ENCODE measurements at regions of chr10 and their contacts with region 1.

Region 1: GRCh38 chr10:16777473-16778370 is 39.5 kb downstream of the RSU1 start:
- DNase-seq: no peak
- H3K4me3 Mint-ChIP-seq: no peak overlapping the region
- H3K27ac Mint-ChIP-seq: peak overlapping the region; percentile 72
- H3K4me1 Mint-ChIP-seq: peaks cover 36% of the 10 kb centered on the region
- H3K27me3 Mint-ChIP-seq: no peaks in the 10 kb centered on the region

Region 2: GRCh38 chr10:15879058-15879457 is 898.7 kb before region 1 on chr10:
- CTCF ChIA-PET with region 1: no interaction called
- intact Hi-C with region 1: loop called (anchors 1 kb)
- DNase-seq: no peak
- H3K4me3 Mint-ChIP-seq: no peak overlapping the region
- H3K27ac Mint-ChIP-seq: no peak overlapping the region
- H3K4me1 Mint-ChIP-seq: no peaks in the 10 kb centered on the region
- H3K27me3 Mint-ChIP-seq: peaks cover 42% of the 10 kb centered on the region

Region 3: DNA sequence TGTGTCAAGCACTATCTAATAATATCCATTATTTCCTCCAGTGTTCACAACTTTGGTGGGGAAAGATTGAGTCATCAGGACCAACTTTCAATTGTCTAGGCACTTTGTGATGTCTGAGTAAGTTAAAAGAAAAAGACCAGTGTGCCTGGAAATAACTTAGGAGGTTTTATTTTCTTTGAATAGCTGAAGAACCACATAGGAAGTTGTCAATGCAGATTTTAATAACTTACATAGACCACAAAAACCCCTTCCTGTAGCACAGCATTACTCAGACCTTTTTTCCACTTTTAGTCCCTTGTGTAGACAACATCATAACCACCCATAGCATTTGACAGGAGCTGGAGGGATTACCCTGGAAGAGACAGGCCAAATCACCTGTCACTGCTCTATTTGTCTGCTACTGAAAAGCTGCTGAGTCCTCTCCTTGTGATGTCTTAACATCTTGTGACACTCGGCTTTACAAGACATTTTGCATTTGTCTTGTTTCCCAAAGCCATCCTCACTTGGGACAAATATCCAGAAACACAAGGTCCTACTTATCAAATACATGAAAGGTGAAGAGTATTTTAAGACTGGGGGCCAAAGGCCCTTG is 582.4 kb before region 1 on chr10:
- CTCF ChIA-PET with region 1: no interaction called
- intact Hi-C with region 1: loop called (anchors 1 kb)
- DNase-seq: peak; percentile 9
- H3K4me3 Mint-ChIP-seq: no peak overlapping the region
- H3K27ac Mint-ChIP-seq: peak overlapping the region; percentile 13
- H3K4me1 Mint-ChIP-seq: peaks cover 11% of the 10 kb centered on the region
- H3K27me3 Mint-ChIP-seq: peaks cover 6% of the 10 kb centered on the region

Region 4: GRCh38 chr10:16520900-16521299 is 256.8 kb before region 1 on chr10:
- CTCF ChIA-PET with region 1: no interaction called
- intact Hi-C with region 1: loop called (anchors 2 kb)
- DNase-seq: peak; percentile 56
- H3K4me3 Mint-ChIP-seq: peak overlapping the region; percentile 62
- H3K27ac Mint-ChIP-seq: no peak overlapping the region
- H3K4me1 Mint-ChIP-seq: peaks cover 6% of the 10 kb centered on the region
- H3K27me3 Mint-ChIP-seq: peaks cover 41% of the 10 kb centered on the region

Region 5: GRCh38 chr10:16799621-16800020 is 21.9 kb after region 1 on chr10:
- CTCF ChIA-PET with region 1: interaction called, 7 read pairs
- intact Hi-C with region 1: loop called (anchors 2 kb)
- DNase-seq: peak; percentile 43
- H3K4me3 Mint-ChIP-seq: no peak overlapping the region
- H3K27ac Mint-ChIP-seq: no peak overlapping the region
- H3K4me1 Mint-ChIP-seq: peaks cover 34% of the 10 kb centered on the region
- H3K27me3 Mint-ChIP-seq: no peaks in the 10 kb centered on the region

Region 6: DNA sequence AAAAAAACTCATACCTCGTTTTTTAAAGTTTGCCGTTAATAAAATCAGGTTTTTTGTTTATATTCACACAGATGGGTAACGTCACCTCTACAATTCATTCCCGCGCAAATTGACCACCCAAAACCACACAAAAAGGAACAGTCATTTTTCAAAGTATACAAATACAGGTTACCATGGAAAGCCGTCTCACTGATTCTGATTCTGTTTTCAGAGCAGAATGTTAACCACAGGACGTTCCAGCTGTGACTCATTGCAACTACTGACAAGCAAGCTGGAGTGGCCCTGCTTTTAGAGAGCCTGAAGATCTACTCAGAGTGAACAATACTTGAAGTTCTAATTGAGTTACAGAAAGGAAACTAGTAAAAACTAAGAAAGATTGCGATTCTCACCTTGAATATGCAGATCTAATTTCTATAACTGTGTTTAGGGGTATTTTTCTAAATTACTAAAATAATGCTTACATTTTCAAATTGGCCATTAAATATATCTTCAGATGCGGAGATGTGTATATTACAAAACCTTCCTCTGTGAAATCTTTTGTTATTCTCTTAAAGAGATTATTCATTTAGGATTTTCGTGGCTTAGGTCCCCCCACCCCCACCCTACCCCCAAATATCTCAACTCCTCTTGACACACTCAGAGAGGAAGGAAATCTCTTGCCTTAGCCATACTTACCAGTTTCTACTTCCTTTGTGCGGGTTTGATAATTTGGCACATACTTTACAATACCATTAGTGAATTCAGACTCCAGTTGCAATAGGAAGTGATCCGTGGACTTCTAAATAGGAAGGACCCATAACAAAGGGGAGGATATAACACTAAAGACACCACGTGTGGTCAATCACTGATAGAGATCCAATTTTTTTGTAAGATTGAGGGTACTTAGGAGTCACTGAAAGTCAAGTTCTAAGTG is 245.9 kb after region 1 on chr10:
- CTCF ChIA-PET with region 1: no interaction called
- intact Hi-C with region 1: loop called (anchors 1 kb)
- DNase-seq: peak; percentile 93
- H3K4me3 Mint-ChIP-seq: peak overlapping the region; percentile 7
- H3K27ac Mint-ChIP-seq: peak overlapping the region; percentile 78
- H3K4me1 Mint-ChIP-seq: peaks cover 59% of the 10 kb centered on the region
- H3K27me3 Mint-ChIP-seq: peaks cover 2% of the 10 kb centered on the region

Region 7: DNA sequence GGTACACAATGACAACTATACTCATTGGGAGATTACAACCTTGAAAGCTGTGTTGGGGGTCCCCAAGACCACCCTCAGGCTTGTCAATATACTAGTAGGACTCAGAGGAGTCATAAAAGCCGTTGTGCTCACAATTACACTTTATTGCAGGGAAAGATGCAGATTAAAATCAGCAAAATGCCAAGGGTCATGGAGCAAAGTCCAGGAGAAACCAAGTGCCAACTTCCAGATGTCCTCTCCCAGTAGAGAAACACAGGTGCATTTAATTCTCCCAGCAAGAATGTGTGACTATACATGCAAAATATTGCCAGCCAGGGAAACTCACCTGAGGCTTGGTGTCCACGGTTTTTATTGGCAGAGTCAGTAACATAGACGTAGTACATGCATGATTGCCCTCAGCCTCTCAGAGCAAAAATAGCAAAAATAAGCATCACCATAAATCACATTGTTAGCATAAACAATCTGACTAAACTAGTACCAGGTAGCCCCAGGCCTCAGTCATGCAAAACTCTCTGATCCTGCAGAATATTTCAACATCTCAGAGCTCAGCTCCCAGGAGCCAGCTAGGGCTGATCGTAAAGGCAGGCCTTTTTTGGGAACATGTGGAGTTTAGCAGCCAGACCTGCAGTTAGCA is 501.0 kb after region 1 on chr10:
- CTCF ChIA-PET with region 1: no interaction called
- intact Hi-C with region 1: no loop called
- DNase-seq: no peak
- H3K4me3 Mint-ChIP-seq: no peak overlapping the region
- H3K27ac Mint-ChIP-seq: no peak overlapping the region
- H3K4me1 Mint-ChIP-seq: peaks cover 2% of the 10 kb centered on the region
- H3K27me3 Mint-ChIP-seq: peaks cover 3% of the 10 kb centered on the region

Measured in activated naive CD4-positive, alpha-beta T cell treated with anti-CD3 and anti-CD28 coated beads for 36 hours (primary cell).